Mucosa of descending colon (tissue), 3 donors: ENCODE measurements at regions of chr11 and their contacts with region 1.

Region 1: GRCh38 chr11:66386171-66387069 is 14.9 kb upstream of the SLC29A2 start:
- DNase-seq: peak; percentile 75 to 96 (median 85)
- ATAC-seq: peak; percentile 91
- H3K4me3 ChIP-seq: no peak overlapping the region
- H3K4me1 ChIP-seq: no peaks in the 10 kb centered on the region
- CTCF ChIP-seq: peak; percentile 86

Region 2: GRCh38 chr11:66311965-66312548 is 74.4 kb before region 1 on chr11:
- intact Hi-C with region 1: loop called in 1 of 2 experiments (anchors 10 kb)
- DNase-seq: peak; percentile 93 to 97 (median 95)
- ATAC-seq: peak; percentile 79
- H3K4me3 ChIP-seq: no peak overlapping the region
- H3K4me1 ChIP-seq: peaks cover 7% of the 10 kb centered on the region
- CTCF ChIP-seq: peak; percentile 84